Dorsolateral prefrontal cortex (tissue), 120 donors: ENCODE measurements at regions of chrX and their contacts with region 1.

Region 1: GRCh38 chrX:24498975-24499374 is 33.9 kb downstream of the PDK3 start:
- DNase-seq: no peak
- H3K4me3 ChIP-seq: no peak overlapping the region
- H3K27ac ChIP-seq: no peak overlapping the region
- H3K27me3 ChIP-seq: peaks cover 0 to 49% (median 4%) of the 10 kb centered on the region in 45 donors
- CTCF ChIP-seq: peak; percentile 11 to 71 (median 53)

Region 2: GRCh38 chrX:24395775-24396174 is 103.2 kb before region 1 on chrX:
- intact Hi-C with region 1: loop called (anchors 5 kb)
- DNase-seq: peak in 2 of 10 donors; percentile 16 to 17
- H3K4me3 ChIP-seq: no peak overlapping the region
- H3K27ac ChIP-seq: peak overlapping the region in 41 of 59 donors; percentile 2 to 78 (median 61)
- H3K27me3 ChIP-seq: peaks cover 0 to 91% (median 33%) of the 10 kb centered on the region in 45 donors
- CTCF ChIP-seq: peak; percentile 40 to 82 (median 71)

Region 3: DNA sequence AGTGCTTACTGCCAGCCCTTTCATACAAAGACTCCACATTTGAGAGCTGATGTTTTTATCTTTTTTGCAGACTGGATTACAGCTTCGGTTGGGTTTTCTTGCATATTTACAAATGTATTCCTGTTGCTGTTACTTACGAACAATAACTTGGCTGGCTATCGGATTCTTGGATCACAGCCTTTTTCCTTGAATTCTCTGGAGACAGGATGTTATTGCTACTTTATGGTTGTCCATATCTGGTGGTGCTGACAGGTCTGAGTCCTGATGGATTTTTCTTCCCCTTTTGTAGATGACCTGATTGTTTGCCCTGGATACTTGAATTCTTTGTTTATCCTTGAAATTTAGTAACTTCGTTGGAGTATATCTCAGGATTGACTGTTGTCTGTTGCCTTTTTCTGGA is 43.8 kb after region 1 on chrX:
- intact Hi-C with region 1: no loop called
- DNase-seq: no peak
- H3K4me3 ChIP-seq: no peak overlapping the region
- H3K27ac ChIP-seq: no peak overlapping the region
- H3K27me3 ChIP-seq: peaks cover 0 to 46% (median 4%) of the 10 kb centered on the region in 45 donors
- CTCF ChIP-seq: no peak